Activated naive CD4-positive, alpha-beta T cell treated with anti-CD3 and anti-CD28 coated beads for 36 hours (primary cell): ENCODE measurements at regions of chr17 and their contacts with region 1.

Region 1: DNA sequence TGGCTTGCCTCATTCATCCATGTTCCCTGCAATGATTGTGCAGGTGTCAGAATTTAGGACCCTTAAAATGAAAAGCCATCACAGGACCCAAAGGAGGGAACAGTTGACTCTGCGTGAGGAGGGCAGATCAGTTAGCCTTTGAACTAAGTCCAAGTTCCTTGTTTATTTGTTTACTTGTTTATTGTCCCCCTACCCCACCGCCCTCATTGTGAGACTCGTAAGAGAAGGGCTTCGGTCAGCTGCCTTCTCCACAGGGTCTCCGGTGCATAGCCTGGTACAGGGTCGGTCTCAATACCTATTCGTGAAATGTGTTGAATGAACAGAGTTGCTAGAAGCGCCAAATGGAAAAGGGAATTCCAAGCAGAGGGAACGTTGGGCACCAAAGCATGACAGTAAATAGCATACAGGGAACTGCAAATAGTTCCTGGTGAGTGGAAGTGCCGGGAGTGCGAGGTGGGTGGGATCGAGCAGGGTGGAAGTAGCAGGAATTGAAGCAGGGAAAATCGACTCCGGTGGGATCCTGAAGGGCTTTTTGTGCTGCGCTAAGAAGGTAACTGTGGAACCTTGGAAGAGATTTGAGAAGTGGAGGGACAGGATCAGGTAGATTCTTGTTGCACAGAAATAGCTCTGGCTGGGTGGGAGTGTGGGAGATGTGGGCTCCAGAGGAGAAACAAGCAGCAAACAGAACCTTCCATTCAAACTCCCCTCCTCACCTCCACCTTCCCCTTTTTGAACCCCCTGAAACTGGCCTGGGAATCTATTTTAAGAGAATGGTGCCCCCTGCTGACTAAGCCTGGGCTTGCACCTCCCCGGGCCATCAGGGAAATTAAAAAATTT is 12.7 kb downstream of the SLC35B1 start:
- DNase-seq: peak; percentile 87
- H3K4me3 Mint-ChIP-seq: no peak overlapping the region
- H3K27ac Mint-ChIP-seq: peak overlapping the region; percentile 92
- H3K4me1 Mint-ChIP-seq: peaks cover 39% of the 10 kb centered on the region
- H3K27me3 Mint-ChIP-seq: no peaks in the 10 kb centered on the region

Region 2: DNA sequence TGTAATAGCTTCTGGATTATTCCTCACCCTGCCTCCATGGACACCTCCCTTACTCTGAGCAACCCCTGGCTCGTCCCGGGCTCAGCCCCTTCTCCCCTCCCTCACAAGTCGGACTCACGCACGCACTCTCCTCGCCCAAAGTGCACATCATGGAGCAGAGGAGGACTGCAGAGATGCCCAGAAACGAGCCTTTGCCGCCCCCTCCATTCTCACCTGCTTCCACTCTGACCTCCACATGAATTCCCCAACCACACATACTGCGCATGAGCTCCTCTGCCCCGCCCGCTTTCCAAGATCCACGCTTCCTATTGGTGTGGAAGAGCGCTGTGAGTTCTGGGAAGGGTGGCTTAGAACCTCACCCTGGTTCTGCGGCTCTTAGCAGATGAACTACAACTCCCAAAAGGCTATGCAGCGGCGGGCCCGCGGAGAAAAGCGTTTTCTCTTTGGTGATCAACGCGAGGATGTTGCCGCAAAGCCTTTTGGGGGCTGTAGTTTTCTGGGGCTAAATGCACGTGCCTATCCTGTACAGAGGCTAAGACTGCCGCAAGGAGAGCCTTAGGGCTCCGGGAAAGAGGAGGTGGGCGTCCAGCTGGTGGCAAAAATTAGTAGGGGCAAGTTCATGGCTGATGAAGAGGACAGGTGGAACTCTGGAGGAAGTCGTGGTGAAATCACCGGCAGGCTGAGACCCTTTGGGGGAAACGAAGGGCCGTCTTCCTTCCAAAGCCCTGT is 280.3 kb before region 1 on chr17 and contains the start of gene PHB1:
- CTCF ChIA-PET with region 1: no interaction called
- intact Hi-C with region 1: loop called (anchors 5 kb)
- DNase-seq: peak; percentile 99
- H3K4me3 Mint-ChIP-seq: peak within 1 kb of the TSS; percentile 100
- H3K27ac Mint-ChIP-seq: peak within 1 kb of the TSS; percentile 78
- H3K4me1 Mint-ChIP-seq: peaks cover 32% of the 10 kb centered on the region
- H3K27me3 Mint-ChIP-seq: no peaks in the 10 kb centered on the region
- total RNA-seq, gene PHB1: 390 to 404 TPM

Region 3: GRCh38 chr17:49515196-49515770 is 179.8 kb before region 1 on chr17:
- CTCF ChIA-PET with region 1: no interaction called
- intact Hi-C with region 1: no loop called
- DNase-seq: no peak
- H3K4me3 Mint-ChIP-seq: no peak overlapping the region
- H3K27ac Mint-ChIP-seq: no peak overlapping the region
- H3K4me1 Mint-ChIP-seq: no peaks in the 10 kb centered on the region
- H3K27me3 Mint-ChIP-seq: no peaks in the 10 kb centered on the region

Region 4: GRCh38 chr17:49567871-49568694 is 127.0 kb before region 1 on chr17:
- CTCF ChIA-PET with region 1: interaction called, 232 read pairs
- intact Hi-C with region 1: loop called (anchors 1 kb)
- DNase-seq: peak; percentile 89
- H3K4me3 Mint-ChIP-seq: peak overlapping the region; percentile 74
- H3K27ac Mint-ChIP-seq: no peak overlapping the region
- H3K4me1 Mint-ChIP-seq: peaks cover 15% of the 10 kb centered on the region
- H3K27me3 Mint-ChIP-seq: peaks cover 8% of the 10 kb centered on the region

Region 5: DNA sequence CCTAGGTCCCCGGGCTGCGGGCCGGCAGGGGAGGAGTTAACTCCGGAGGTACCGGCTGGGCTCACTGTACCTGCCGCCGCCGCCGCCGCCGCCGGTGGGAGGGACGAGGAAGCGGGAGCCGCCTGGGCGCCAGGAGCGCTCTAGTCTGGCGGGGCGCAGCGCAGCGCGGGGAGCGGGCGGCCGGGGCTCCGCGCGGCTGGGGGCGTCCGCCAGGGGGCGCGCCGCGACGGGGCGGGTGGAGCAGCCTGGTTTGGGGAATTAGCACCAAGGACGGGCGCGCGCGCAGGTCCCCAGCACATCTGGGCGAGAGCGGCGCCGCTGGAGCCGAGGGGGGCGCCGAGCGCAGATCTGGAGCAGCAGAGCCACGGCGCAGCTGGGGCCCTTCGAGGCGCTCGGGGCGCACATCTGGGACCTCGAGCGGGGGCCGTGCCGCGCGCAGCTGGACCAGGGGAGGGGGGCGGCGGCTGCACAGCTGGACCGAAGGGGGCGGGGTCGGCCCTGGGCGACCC is 119.4 kb before region 1 on chr17 and contains the start of gene NXPH3:
- CTCF ChIA-PET with region 1: interaction called, 232 read pairs
- intact Hi-C with region 1: loop called (anchors 1 kb)
- DNase-seq: peak; percentile 77
- H3K4me3 Mint-ChIP-seq: peak within 1 kb of the TSS; percentile 76
- H3K27ac Mint-ChIP-seq: no peak within 1 kb of the TSS
- H3K4me1 Mint-ChIP-seq: peaks cover 15% of the 10 kb centered on the region
- H3K27me3 Mint-ChIP-seq: peaks cover 38% of the 10 kb centered on the region
- total RNA-seq, gene NXPH3: 0.25 to 0.26 TPM

Region 6: GRCh38 chr17:49646391-49647255 is 48.4 kb before region 1 on chr17:
- CTCF ChIA-PET with region 1: interaction called, 14 read pairs
- intact Hi-C with region 1: no loop called
- DNase-seq: peak; percentile 81
- H3K4me3 Mint-ChIP-seq: no peak overlapping the region
- H3K27ac Mint-ChIP-seq: peak overlapping the region; percentile 76
- H3K4me1 Mint-ChIP-seq: peaks cover 63% of the 10 kb centered on the region
- H3K27me3 Mint-ChIP-seq: no peaks in the 10 kb centered on the region

Region 7: GRCh38 chr17:49851387-49852291 is 156.6 kb after region 1 on chr17:
- CTCF ChIA-PET with region 1: interaction called, 3 read pairs
- intact Hi-C with region 1: loop called (anchors 1 kb)
- DNase-seq: peak; percentile 76
- H3K4me3 Mint-ChIP-seq: peak overlapping the region; percentile 78
- H3K27ac Mint-ChIP-seq: peak overlapping the region; percentile 64
- H3K4me1 Mint-ChIP-seq: peaks cover 12% of the 10 kb centered on the region
- H3K27me3 Mint-ChIP-seq: peaks cover 2% of the 10 kb centered on the region

Region 8: GRCh38 chr17:50087246-50087911 is 392.3 kb after region 1 on chr17:
- CTCF ChIA-PET with region 1: no interaction called
- intact Hi-C with region 1: no loop called
- DNase-seq: peak; percentile 85
- H3K4me3 Mint-ChIP-seq: no peak overlapping the region
- H3K27ac Mint-ChIP-seq: no peak overlapping the region
- H3K4me1 Mint-ChIP-seq: no peaks in the 10 kb centered on the region
- H3K27me3 Mint-ChIP-seq: no peaks in the 10 kb centered on the region